ENCODE measurements at regions of chr14 and their contacts with region 1.

Region 1: DNA sequence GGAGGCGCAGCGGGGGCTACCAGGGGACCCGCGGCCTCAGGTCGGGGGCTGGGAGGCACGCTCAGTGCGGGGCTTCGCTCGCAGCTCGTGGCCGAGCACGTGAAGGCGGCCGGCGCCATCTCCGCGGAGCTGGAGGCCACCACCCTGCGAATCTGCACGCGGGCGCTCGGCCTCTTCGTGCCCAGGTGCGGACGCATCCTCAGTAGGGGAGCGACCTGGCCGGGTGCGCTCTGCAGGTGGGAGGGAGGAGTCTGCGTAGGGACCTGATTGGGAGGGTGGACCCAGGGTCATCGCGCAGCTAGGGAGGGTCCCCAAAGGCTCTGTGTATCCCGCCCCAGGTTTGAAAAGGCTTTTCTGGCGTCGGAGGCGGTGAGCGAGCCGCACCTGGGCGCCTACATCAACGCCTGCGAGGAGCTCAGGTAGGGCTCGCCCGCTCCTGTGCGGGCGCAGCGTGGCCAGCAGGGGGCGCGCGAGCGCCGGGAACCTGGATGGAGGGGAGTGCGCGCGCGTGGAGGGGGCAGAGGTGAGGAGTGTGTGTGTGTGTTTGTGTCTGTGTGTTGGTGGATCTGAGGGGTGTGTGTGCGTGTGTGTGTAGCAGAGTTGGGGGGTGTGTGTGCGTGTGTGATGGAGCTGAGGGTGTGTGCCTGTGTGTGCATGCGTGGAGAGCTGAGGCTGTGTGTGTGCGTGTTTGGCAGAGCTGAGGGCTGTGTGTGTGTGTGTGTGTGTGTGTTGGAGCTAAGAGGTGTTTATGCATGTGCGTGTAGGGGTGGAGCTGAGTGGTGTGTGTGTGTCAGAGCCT is 10.3 kb downstream of the EXOC3L4 start:
- DNase-seq: peak; percentile 71
- H3K4me3 Mint-ChIP-seq: no peak overlapping the region
- H3K27ac Mint-ChIP-seq: no peak overlapping the region
- H3K4me1 Mint-ChIP-seq: peaks cover 11% of the 10 kb centered on the region
- H3K27me3 Mint-ChIP-seq: peaks cover 34% of the 10 kb centered on the region

Region 2: GRCh38 chr14:103014466-103015319 is 90.2 kb before region 1 on chr14:
- CTCF ChIA-PET with region 1: no interaction called
- intact Hi-C with region 1: no loop called
- DNase-seq: no peak
- H3K4me3 Mint-ChIP-seq: no peak overlapping the region
- H3K27ac Mint-ChIP-seq: no peak overlapping the region
- H3K4me1 Mint-ChIP-seq: peaks cover 6% of the 10 kb centered on the region
- H3K27me3 Mint-ChIP-seq: peaks cover 1% of the 10 kb centered on the region

Region 3: DNA sequence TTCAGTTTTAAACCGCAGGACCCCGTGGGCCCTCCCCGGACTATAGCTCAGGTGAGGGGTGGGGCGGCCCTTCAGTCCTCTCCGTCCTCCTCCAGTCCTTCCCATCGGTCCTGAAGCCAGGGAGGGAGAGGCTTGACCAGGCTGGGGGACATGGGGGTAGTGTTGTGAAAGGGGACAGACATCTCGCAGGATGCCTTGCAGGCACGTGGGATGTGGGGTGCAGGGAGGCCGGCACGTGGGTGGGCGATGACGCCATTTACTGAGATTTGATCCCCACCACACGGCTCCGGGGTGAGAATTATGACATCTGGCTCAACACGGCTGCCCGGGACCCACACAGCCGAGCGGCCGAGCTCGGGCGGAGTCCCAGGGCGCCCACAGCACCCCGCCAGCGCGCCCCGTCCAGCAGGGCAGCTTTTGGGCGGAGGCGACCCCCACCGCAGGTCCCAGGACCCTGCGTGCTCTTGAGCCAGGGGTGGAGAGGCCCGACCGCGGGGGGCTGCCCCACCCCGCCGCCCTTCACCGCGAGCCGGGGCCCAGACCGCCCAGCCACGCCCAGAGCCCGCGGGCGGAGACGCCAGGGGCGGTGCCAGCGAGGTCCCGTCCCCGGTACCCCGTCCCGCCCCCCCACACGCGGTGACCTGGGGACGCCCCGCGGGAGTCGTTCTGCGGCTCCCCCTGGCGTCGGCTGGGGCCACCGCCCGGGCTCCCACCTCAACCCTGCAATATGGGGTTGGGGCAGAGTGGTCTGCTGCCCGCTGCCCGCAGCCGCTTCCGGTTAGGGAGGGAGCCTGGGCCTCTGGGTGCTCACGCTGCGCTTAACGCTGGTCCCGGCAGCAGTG is 13.6 kb before region 1 on chr14:
- CTCF ChIA-PET with region 1: interaction called, 28 read pairs
- intact Hi-C with region 1: no loop called
- DNase-seq: peak; percentile 76
- H3K4me3 Mint-ChIP-seq: peak overlapping the region; percentile 29
- H3K27ac Mint-ChIP-seq: no peak overlapping the region
- H3K4me1 Mint-ChIP-seq: peaks cover 3% of the 10 kb centered on the region
- H3K27me3 Mint-ChIP-seq: no peaks in the 10 kb centered on the region

Region 4: DNA sequence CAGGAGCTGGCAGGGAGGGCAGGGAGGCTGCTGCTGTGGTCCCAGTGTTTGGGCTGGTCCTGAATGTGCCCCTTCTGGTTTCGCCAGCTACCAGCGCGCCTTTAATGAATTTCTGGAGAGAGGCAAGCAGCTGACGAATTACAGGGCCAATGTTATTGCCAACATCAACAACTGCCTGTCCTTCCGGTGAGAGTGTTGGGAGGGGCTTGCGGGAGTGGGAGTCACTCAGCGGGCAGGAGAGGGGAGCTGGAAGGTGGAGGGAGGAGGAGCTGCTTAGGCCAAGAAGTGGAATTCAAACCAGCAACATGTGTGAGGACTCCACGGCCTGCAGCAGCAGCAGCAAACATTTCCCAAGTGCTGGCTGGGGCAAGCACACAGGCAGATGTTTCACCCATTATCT is 26.1 kb after region 1 on chr14:
- CTCF ChIA-PET with region 1: interaction called, 11 read pairs
- intact Hi-C with region 1: no loop called
- DNase-seq: no peak
- H3K4me3 Mint-ChIP-seq: no peak overlapping the region
- H3K27ac Mint-ChIP-seq: no peak overlapping the region
- H3K4me1 Mint-ChIP-seq: no peaks in the 10 kb centered on the region
- H3K27me3 Mint-ChIP-seq: no peaks in the 10 kb centered on the region

Region 5: DNA sequence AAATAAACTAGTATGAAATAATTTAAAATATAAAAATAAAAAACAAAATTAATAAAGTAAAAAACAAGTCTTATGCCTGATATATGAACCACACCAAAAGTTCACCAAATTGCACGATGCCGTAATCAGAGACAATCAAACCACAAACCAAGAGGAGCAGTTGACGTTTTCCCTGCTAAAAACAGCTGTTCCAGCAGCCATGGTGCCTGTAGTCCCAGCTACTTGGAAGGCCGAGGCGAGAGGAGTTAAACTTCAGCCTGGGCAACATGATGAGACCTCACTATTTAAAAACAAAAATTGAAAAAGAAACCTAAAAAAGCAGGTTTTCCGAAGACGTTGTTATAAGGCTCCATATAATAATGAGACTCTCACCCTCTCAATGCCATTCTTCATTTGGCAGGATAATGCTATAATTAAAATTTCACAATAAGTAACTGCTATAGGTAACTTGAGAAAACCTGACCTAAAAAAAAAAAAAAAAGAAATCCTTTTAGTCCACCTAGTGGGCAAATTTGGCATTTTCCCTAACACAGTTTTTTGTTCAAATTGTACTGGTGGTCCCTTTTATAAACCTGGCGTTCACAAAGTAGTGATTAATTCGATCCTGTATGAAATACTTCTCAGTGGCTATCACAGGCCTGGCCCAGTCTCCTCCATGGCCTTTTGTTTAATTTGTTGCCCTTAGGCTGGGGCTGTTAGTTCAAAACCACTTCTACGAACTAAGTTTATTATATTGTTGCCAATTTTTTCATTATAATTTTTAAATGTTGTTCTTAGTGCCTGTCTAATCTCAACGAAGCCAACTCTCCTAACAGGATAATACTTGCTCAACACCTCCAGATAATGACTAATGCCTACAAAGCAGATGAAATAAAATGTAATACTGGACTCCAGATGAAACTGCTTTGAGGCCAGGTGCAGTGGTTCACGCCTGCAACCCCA is 80.5 kb after region 1 on chr14:
- CTCF ChIA-PET with region 1: interaction called, 28 read pairs
- intact Hi-C with region 1: loop called (anchors 1 kb)
- DNase-seq: no peak
- H3K4me3 Mint-ChIP-seq: no peak overlapping the region
- H3K27ac Mint-ChIP-seq: no peak overlapping the region
- H3K4me1 Mint-ChIP-seq: peaks cover 8% of the 10 kb centered on the region
- H3K27me3 Mint-ChIP-seq: peaks cover 43% of the 10 kb centered on the region

Measured in activated naive CD4-positive, alpha-beta T cell treated with anti-CD3 and anti-CD28 coated beads for 36 hours (primary cell).